ENCODE measurements at regions of chr16 and their contacts with region 1.

Region 1: DNA sequence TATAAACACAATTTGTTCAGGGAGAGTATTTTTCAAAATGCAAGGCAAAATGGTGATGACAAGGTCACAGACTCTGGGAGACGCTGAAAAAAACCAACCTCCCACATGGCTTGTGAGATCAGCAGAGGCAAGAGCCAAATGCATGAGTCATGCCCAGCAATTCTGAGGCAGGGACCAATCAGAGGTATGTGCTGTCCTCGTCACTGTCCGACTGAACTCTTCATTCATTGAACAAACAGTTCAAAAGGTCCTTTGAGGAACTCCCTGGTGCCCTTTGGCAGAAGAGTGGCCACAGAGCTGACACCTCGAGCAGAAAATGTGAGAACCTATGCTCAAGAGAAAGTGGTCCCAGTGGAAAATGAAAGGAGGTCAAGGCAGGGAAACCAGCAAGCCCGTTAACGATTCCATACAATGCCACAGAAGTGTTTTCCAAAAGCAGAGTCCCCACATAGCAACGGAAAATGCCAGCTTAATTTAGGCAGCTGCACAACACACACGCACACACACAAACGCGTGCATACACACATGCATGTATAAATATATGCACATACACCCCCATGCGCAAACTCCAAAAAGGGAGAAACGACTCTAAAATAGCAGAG is 50.9 kb downstream of the CDH11 start:
- DNase-seq: peak; percentile 67
- ATAC-seq: peak; percentile 95

Region 2: GRCh38 chr16:65024767-65025178 is 46.2 kb before region 1 on chr16:
- intact Hi-C with region 1: loop called (anchors 1 kb)
- DNase-seq: no peak
- ATAC-seq: no peak

Region 3: GRCh38 chr16:65497571-65497970 is 426.6 kb after region 1 on chr16:
- intact Hi-C with region 1: no loop called
- DNase-seq: no peak
- ATAC-seq: no peak

Measured in Right ventricle myocardium inferior (tissue), 1 donor.